ENCODE measurements at regions of chr1 and their contacts with region 1.

Region 1: GRCh38 chr1:41416552-41417334 is 55.5 kb downstream of the FOXO6 start:
- DNase-seq: peak; percentile 61 to 76 (median 75)
- H3K4me3 ChIP-seq: no peak overlapping the region
- H3K27ac ChIP-seq: no peak overlapping the region
- H3K4me1 ChIP-seq: no peaks in the 10 kb centered on the region
- H3K27me3 ChIP-seq: no peaks in the 10 kb centered on the region
- CTCF ChIP-seq: peak; percentile 89 to 92 (median 91)
- EP300 ChIP-seq: no peak
- POLR2A ChIP-seq: no peak

Region 2: DNA sequence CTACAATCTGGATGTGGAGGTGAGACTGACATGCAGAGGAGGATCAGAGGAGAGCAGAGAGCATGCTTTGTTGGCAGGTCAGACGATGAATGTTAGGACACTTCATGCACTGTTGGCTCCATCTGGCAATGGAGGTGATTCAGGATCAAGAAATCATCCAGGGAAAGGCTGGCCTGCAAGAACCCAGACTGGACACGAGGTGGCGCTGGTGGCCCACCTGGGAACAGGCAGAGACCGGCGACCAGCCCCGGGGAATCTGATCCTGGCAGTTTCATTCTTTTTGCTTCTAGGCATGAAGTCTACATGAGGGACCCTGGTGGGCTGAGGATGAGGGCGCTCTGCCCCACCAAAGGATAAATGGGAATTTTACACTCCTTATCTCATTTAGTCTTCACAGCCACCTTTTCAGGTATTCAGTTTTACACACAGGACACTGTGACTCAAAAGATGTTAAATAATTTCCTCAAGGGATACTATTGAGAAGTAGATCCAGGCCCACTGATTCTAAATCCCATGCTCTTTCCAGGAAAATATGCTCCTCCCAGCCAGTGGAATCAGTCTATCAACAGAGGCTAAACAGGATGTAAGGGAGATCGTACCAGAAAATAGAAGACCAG is 148.5 kb before region 1 on chr1:
- intact Hi-C with region 1: loop called (anchors 2 to 5 kb)
- DNase-seq: peak; percentile 65 to 81 (median 78)
- H3K4me3 ChIP-seq: no peak overlapping the region
- H3K27ac ChIP-seq: no peak overlapping the region
- H3K4me1 ChIP-seq: no peaks in the 10 kb centered on the region
- H3K27me3 ChIP-seq: no peaks in the 10 kb centered on the region
- CTCF ChIP-seq: peak; percentile 89 to 94 (median 91)
- EP300 ChIP-seq: no peak
- POLR2A ChIP-seq: no peak

Region 3: GRCh38 chr1:41282679-41283317 is 133.9 kb before region 1 on chr1:
- intact Hi-C with region 1: loop called (anchors 5 kb)
- DNase-seq: peak; percentile 22 to 63 (median 52)
- H3K4me3 ChIP-seq: no peak overlapping the region
- H3K27ac ChIP-seq: no peak overlapping the region
- H3K4me1 ChIP-seq: peaks cover 3% of the 10 kb centered on the region
- H3K27me3 ChIP-seq: no peaks in the 10 kb centered on the region
- CTCF ChIP-seq: peak; percentile 45 to 74 (median 70)
- EP300 ChIP-seq: no peak
- POLR2A ChIP-seq: no peak

Region 4: GRCh38 chr1:41333146-41333784 is 83.5 kb before region 1 on chr1:
- intact Hi-C with region 1: no loop called
- DNase-seq: peak in 1 of 5 donors; percentile 0
- H3K4me3 ChIP-seq: no peak overlapping the region
- H3K27ac ChIP-seq: no peak overlapping the region
- H3K4me1 ChIP-seq: no peaks in the 10 kb centered on the region
- H3K27me3 ChIP-seq: no peaks in the 10 kb centered on the region
- CTCF ChIP-seq: no peak
- EP300 ChIP-seq: no peak
- POLR2A ChIP-seq: no peak

Region 5: DNA sequence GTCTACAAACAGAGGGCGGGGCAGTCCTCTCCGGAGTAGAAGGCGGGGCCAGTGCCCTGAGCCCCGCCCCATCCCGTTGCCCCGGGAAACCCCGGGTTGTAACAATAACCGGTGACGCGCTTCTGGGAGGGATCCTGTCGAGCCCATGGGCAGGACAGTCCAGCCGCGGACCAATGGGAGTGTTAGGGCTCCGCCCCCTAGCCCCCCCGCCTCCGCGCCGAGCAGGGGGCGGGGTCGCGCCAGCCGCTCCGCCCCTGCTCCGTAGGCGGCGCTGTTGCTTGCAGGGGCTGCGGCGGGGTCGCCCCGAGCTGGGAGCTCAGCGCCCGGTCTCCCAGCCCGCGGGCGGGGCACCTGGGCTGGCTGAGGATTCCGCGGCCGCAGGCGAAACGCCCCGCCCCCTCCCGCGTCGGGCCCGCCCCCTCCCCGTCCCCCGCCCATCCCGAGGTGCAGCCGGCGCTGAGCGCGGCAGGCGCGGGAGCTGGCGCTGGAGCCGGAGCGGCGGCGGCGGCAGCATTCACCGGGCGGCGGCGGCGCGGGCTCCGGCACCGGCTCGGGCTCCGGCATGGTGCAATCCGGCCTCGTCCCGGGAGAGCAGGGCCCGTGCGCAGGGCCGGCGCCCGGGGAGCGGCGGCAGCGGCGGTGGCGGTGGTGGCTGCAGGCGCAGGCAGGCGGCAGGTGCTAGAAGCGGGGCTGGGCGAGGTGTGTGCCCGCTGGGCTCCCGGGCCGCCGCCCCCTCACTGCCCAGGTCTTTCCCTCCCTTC is 55.6 kb before region 1 on chr1 and contains the start of gene FOXO6:
- intact Hi-C with region 1: loop called in 1 of 4 experiments (anchors 5 kb)
- DNase-seq: peak; percentile 99
- H3K4me3 ChIP-seq: peak within 1 kb of the TSS; percentile 61
- H3K27ac ChIP-seq: peak within 1 kb of the TSS in 1 of 2 donors; percentile 22
- H3K4me1 ChIP-seq: peaks cover 9% of the 10 kb centered on the region
- H3K27me3 ChIP-seq: no peaks in the 10 kb centered on the region
- CTCF ChIP-seq: peak; percentile 75 to 91 (median 81)
- EP300 ChIP-seq: no peak
- POLR2A ChIP-seq: peak; percentile 64
- total RNA-seq, gene FOXO6: 3.9 to 18.9 (median 10.3) TPM

Region 6: DNA sequence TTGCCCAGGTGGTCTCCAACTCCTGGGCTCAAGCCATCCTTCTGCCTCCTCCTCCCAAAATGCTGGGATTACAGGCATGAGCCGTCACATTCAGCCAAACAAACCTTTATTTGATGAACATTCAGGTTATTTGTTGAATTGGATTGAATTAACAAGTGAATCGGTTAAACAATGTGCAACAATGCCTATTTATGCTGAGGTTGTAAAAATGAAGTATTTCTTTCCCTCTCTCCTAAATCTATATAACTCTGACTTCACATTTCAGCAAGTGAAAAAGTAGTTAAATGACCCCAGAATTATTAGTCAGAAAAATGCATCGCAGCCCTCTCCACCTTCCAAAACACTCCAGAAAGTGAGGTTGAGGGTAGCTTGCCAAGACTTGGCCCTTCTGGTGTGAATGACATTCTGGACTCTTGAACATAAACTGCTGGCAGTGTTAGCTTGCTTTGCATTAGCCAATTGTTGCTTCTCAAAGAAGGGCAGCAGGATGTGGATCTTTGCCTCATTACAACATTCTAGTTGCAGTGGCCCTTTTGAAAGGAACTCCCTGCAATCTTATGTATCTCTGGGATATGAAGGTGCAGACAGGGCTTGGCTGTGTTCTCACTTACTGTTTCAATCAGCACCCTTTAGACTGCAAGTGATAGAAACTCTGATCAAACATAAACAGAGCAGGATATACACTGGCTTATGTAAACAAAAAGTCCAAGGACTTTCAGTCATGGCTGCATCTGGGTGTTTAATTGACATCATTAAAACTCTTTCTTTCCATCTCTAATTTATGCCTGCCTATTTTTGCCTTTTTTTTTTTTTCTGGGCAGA is 45.3 kb after region 1 on chr1:
- intact Hi-C with region 1: no loop called
- DNase-seq: no peak
- H3K4me3 ChIP-seq: no peak overlapping the region
- H3K27ac ChIP-seq: no peak overlapping the region
- H3K4me1 ChIP-seq: no peaks in the 10 kb centered on the region
- H3K27me3 ChIP-seq: no peaks in the 10 kb centered on the region
- CTCF ChIP-seq: no peak
- EP300 ChIP-seq: no peak
- POLR2A ChIP-seq: no peak